Psoas muscle (tissue), 8 donors: ENCODE measurements at regions of chr20 and their contacts with region 1.

Region 1: DNA sequence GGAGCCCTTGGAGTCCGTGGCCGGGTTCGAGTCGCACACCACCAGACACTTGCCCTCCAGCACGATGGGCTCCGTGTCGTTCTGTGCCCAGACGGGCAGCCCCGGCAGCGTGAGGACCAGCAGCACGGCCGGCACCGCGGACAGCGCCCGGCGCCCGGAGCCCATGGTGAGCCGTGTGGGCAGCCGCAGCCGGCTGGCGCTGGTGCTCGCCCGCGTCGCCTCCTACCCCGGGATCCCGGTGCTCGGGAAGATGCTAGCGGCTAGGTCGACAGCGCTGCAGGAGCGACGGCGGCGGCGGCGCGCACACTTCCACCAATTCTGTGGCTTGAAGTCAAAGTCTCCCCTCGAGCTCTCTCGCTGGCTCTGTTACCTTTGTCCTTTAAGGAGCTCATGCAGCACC is 1.3 kb downstream of the CBLN4 start:
- DNase-seq: peak in 1 of 2 donors; percentile 14
- ATAC-seq: no peak
- H3K4me3 ChIP-seq: no peak overlapping the region
- H3K27ac ChIP-seq: no peak overlapping the region
- H3K4me1 ChIP-seq: no peaks in the 10 kb centered on the region
- H3K27me3 ChIP-seq: peaks cover 0 to 32% (median 11%) of the 10 kb centered on the region in 3 donors
- CTCF ChIP-seq: no peak

Region 2: GRCh38 chr20:55830121-55830827 is 173.7 kb before region 1 on chr20:
- intact Hi-C with region 1: loop called in 1 of 2 experiments (anchors 5 kb)
- DNase-seq: no peak
- ATAC-seq: no peak
- H3K4me3 ChIP-seq: no peak overlapping the region
- H3K27ac ChIP-seq: no peak overlapping the region
- H3K4me1 ChIP-seq: no peaks in the 10 kb centered on the region
- H3K27me3 ChIP-seq: no peaks in the 10 kb centered on the region
- CTCF ChIP-seq: no peak